Posterior cingulate gyrus (tissue), 11 donors: ENCODE measurements at regions of chr1 and their contacts with region 1.

Region 1: GRCh38 chr1:62746085-62746808 is 37.7 kb upstream of the ATG4C start:
- DNase-seq: no peak

Region 2: GRCh38 chr1:62175568-62176179 is 570.6 kb before region 1 on chr1:
- intact Hi-C with region 1: loop called (anchors 10 kb)
- DNase-seq: peak in 5 of 10 donors; percentile 20 to 82 (median 43)

Region 3: DNA sequence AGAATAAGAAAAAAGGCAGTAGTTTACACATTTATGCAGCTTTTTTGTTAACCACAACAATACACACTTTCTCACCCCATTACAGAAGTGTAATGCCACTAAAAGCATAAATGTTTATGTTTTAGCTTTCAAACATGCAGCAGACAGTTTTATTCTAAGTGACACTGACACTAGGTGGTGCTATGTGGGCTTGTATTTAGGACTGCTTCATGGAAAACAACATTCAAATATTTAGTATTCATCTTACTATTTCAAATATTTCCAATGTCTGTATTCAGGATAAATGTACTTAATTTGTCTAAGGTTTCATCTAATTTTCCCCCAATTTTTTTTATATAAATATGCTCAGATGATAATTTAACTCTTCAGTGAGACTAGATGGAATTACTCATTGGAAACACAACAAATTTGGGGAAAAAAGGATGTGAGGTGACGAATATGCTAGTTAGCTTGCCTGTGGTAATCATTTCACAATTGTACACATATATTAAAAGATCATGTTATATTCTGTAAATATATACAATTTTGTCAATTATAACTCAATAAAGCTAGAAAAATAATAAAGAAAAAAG is 238.0 kb before region 1 on chr1:
- intact Hi-C with region 1: loop called (anchors 1 kb)
- DNase-seq: no peak

Region 4: GRCh38 chr1:62530516-62531154 is 215.6 kb before region 1 on chr1:
- intact Hi-C with region 1: loop called (anchors 2 kb)
- DNase-seq: peak; percentile 54 to 92 (median 62)

Region 5: GRCh38 chr1:62706985-62707743 is 39.1 kb before region 1 on chr1:
- intact Hi-C with region 1: no loop called
- DNase-seq: no peak